ENCODE measurements at regions of chr6 and their contacts with region 1.

Region 1: DNA sequence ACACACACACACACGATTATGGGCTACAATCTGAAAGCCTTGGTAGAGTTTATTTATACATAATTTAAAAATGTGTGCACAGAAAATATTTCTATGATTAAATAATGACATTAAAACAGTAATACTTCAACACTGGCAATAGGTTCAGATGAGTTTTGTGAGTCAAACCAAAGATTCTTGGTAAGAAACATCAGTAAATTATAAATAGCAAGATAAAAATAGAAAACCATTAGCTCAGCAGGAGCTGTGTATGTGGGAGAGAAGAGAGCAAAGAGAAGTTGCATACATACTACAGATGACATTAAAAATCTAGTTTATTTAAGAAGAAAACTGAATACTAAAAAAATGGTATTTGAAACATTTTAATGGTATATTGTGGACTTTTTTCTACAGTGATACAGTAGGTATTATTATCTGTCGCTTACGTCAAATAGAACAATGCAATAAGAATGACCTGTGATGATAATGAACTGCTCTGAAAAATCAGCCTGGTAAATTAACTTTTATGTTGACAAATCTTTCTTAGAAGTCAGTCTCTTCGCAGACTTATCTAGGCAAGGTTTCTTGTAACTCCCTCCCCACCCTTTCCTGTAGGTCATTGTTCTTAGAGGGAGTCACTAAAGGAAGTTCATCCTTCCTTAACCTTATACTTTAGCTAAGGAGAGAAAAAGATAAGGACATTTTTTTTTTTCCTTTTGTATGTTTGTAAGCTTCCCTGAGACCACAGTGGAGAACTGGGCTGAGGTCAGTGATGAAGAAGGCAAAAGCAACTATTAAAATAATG is 149.3 kb downstream of the GJA1 start:
- DNase-seq: no peak
- ATAC-seq: peak; percentile 58 to 79 (median 71)
- H3K4me3 ChIP-seq: no peak overlapping the region
- H3K27ac ChIP-seq: peak overlapping the region in 10 of 12 donors; percentile 37 to 64 (median 54)
- H3K4me1 ChIP-seq: peaks cover 0 to 23% (median 8%) of the 10 kb centered on the region in 12 donors
- H3K27me3 ChIP-seq: no peaks in the 10 kb centered on the region
- CTCF ChIP-seq: no peak
- POLR2A ChIP-seq: no peak

Region 2: DNA sequence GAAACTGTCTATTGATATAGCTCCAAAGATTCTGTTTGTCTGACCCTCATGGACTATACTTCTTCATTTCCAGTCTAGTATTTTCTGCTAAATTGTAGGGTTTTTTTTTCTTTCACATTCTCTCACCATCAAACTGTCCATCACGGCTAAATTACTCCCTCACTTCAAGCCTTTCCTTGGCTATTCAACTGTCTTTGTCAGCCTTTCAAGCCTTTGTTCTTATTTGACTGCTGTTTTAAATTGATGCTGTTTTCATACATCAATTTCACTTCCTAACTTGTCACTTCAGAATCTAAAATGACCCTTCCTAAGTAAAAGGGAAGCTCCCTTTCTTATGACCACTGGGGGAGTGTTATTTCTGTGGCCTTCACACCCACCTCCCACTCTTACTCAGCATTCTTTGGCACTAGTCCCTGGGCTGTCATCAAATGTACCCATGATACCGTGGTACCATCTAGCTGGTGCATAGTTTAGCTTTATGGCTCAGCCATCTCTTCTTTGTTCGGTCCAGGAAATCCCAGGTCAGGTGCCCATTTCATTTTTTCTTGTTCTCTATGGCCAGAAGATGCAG is 140.7 kb before region 1 on chr6:
- intact Hi-C with region 1: loop called in 6 of 10 experiments (anchors 5 to 10 kb)
- DNase-seq: peak in 3 of 5 donors; percentile 39 to 44 (median 43)
- ATAC-seq: peak; percentile 70 to 83 (median 80)
- H3K4me3 ChIP-seq: peak overlapping the region in 6 of 12 donors; percentile 3 to 86 (median 44)
- H3K27ac ChIP-seq: peak overlapping the region; percentile 2 to 93 (median 54)
- H3K4me1 ChIP-seq: peaks cover 0 to 78% (median 28%) of the 10 kb centered on the region in 12 donors
- H3K27me3 ChIP-seq: no peaks in the 10 kb centered on the region
- CTCF ChIP-seq: no peak
- POLR2A ChIP-seq: no peak

Region 3: GRCh38 chr6:121451250-121451649 is 133.5 kb before region 1 on chr6:
- intact Hi-C with region 1: loop called in 2 of 10 experiments (anchors 10 kb)
- DNase-seq: no peak
- ATAC-seq: no peak
- H3K4me3 ChIP-seq: no peak overlapping the region
- H3K27ac ChIP-seq: no peak overlapping the region
- H3K4me1 ChIP-seq: peaks cover 0 to 26% (median 2%) of the 10 kb centered on the region in 12 donors
- H3K27me3 ChIP-seq: no peaks in the 10 kb centered on the region
- CTCF ChIP-seq: no peak
- POLR2A ChIP-seq: no peak

Region 4: GRCh38 chr6:121597654-121598053 is 12.9 kb after region 1 on chr6:
- intact Hi-C with region 1: no loop called
- DNase-seq: no peak
- ATAC-seq: no peak
- H3K4me3 ChIP-seq: no peak overlapping the region
- H3K27ac ChIP-seq: no peak overlapping the region
- H3K4me1 ChIP-seq: no peaks in the 10 kb centered on the region
- H3K27me3 ChIP-seq: no peaks in the 10 kb centered on the region
- CTCF ChIP-seq: no peak
- POLR2A ChIP-seq: no peak

Region 5: GRCh38 chr6:121652726-121653623 is 68.2 kb after region 1 on chr6:
- intact Hi-C with region 1: loop called in 1 of 10 experiments (anchors 10 kb)
- DNase-seq: no peak
- ATAC-seq: peak; percentile 47 to 83 (median 68)
- H3K4me3 ChIP-seq: peak overlapping the region in 1 of 12 donors; percentile 1
- H3K27ac ChIP-seq: peak overlapping the region in 11 of 12 donors; percentile 23 to 80 (median 62)
- H3K4me1 ChIP-seq: peaks cover 0 to 15% (median 4%) of the 10 kb centered on the region in 12 donors
- H3K27me3 ChIP-seq: no peaks in the 10 kb centered on the region
- CTCF ChIP-seq: no peak
- POLR2A ChIP-seq: no peak

Region 6: DNA sequence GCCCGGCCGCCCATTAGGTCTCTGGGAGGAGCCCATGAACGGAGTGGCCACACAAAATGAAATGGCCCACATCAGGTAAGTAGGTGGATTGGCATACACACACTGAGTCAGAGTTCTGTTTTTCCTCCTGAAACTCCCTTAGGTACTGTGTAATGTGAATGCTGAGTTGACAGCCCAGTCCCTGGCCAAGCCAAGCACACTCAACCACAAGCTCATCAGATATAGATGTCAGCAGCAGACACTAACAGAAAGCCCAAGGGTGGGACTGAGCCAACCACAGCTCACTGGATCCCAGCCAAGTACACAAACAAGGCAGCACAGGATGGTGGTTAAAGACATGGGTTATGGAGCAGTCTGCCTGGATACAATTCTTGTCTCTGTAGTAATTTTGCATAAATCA is 254.1 kb after region 1 on chr6:
- intact Hi-C with region 1: loop called in 1 of 10 experiments (anchors 10 kb)
- DNase-seq: peak; percentile 48 to 75 (median 66)
- ATAC-seq: peak; percentile 93 to 99 (median 96)
- H3K4me3 ChIP-seq: no peak overlapping the region
- H3K27ac ChIP-seq: peak overlapping the region in 4 of 12 donors; percentile 0 to 45 (median 12)
- H3K4me1 ChIP-seq: peaks cover 0 to 8% (median 0%) of the 10 kb centered on the region in 12 donors
- H3K27me3 ChIP-seq: no peaks in the 10 kb centered on the region
- CTCF ChIP-seq: no peak
- POLR2A ChIP-seq: no peak

Region 7: GRCh38 chr6:122020588-122021264 is 435.9 kb after region 1 on chr6:
- intact Hi-C with region 1: loop called in 1 of 10 experiments (anchors 10 kb)
- DNase-seq: no peak
- ATAC-seq: no peak
- H3K4me3 ChIP-seq: no peak overlapping the region
- H3K27ac ChIP-seq: no peak overlapping the region
- H3K4me1 ChIP-seq: no peaks in the 10 kb centered on the region
- H3K27me3 ChIP-seq: no peaks in the 10 kb centered on the region
- CTCF ChIP-seq: no peak
- POLR2A ChIP-seq: no peak

Measured in heart left ventricle (tissue), 16 donors.